Caco-2 (cell line): ENCODE measurements at regions of chr4 and their contacts with region 1.

Region 1: GRCh38 chr4:86497980-86498862 is 95.9 kb upstream of the PTPN13 start:
- DNase-seq: peak in 1 of 2 experiments; percentile 35
- H3K4me3 ChIP-seq: no peak overlapping the region
- H3K4me3 Mint-ChIP-seq: no peak overlapping the region
- H3K27ac Mint-ChIP-seq: no peak overlapping the region
- H3K4me1 ChIP-seq: peaks cover 5% of the 10 kb centered on the region; the same call in 1 of the 2 replicates
- H3K4me1 Mint-ChIP-seq: peaks cover 7% of the 10 kb centered on the region
- H3K27me3 ChIP-seq: no peaks in the 10 kb centered on the region
- H3K27me3 Mint-ChIP-seq: no peaks in the 10 kb centered on the region
- CTCF ChIP-seq: peak; percentile 71 to 75

Region 2: GRCh38 chr4:86380243-86380642 is 118.0 kb before region 1 on chr4:
- CTCF ChIA-PET with region 1: no interaction called
- POLR2A ChIA-PET with region 1: no interaction called
- intact Hi-C with region 1: loop called (anchors 5 kb)
- DNase-seq: peak in 1 of 2 experiments; percentile 55
- H3K4me3 ChIP-seq: no peak overlapping the region
- H3K4me3 Mint-ChIP-seq: no peak overlapping the region
- H3K27ac Mint-ChIP-seq: no peak overlapping the region
- H3K4me1 ChIP-seq: no peaks in the 10 kb centered on the region
- H3K4me1 Mint-ChIP-seq: no peaks in the 10 kb centered on the region
- H3K27me3 ChIP-seq: no peaks in the 10 kb centered on the region; the same call in 1 of the 2 replicates
- H3K27me3 Mint-ChIP-seq: peaks cover 4% of the 10 kb centered on the region
- CTCF ChIP-seq: no peak

Region 3: DNA sequence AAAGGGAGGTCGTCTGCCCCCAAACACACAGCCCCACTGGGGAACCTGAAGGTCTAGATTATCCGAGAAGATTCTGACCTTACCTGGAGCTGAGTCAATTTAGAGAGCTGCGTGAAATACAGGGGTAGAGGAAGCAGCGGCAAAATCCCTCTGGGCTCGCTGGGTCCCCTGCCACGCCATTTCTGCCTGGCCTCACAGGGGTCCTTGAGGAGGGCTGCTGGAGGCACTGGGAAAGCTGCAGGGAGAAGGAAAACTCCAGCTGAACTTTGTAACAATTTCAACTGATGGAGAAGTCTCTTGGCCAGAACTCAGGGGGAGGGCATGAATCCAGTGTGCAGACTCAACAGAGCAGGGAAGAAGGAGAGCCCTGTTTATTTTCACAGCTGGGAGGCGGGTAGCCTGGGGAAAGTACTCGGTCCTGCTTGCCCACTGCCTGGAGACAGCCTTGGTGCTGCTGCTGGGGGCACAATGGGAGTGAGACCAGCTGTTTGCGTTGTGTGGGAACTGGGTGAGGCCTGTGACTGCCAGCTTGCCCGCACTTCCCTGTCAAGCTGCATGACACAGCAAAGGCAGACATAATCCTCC is 45.2 kb before region 1 on chr4:
- CTCF ChIA-PET with region 1: no interaction called
- POLR2A ChIA-PET with region 1: no interaction called
- intact Hi-C with region 1: no loop called
- DNase-seq: no peak
- H3K4me3 ChIP-seq: no peak overlapping the region
- H3K4me3 Mint-ChIP-seq: no peak overlapping the region
- H3K27ac Mint-ChIP-seq: no peak overlapping the region
- H3K4me1 ChIP-seq: no peaks in the 10 kb centered on the region
- H3K4me1 Mint-ChIP-seq: peaks cover 16% of the 10 kb centered on the region
- H3K27me3 ChIP-seq: no peaks in the 10 kb centered on the region
- H3K27me3 Mint-ChIP-seq: no peaks in the 10 kb centered on the region
- CTCF ChIP-seq: no peak

Region 4: DNA sequence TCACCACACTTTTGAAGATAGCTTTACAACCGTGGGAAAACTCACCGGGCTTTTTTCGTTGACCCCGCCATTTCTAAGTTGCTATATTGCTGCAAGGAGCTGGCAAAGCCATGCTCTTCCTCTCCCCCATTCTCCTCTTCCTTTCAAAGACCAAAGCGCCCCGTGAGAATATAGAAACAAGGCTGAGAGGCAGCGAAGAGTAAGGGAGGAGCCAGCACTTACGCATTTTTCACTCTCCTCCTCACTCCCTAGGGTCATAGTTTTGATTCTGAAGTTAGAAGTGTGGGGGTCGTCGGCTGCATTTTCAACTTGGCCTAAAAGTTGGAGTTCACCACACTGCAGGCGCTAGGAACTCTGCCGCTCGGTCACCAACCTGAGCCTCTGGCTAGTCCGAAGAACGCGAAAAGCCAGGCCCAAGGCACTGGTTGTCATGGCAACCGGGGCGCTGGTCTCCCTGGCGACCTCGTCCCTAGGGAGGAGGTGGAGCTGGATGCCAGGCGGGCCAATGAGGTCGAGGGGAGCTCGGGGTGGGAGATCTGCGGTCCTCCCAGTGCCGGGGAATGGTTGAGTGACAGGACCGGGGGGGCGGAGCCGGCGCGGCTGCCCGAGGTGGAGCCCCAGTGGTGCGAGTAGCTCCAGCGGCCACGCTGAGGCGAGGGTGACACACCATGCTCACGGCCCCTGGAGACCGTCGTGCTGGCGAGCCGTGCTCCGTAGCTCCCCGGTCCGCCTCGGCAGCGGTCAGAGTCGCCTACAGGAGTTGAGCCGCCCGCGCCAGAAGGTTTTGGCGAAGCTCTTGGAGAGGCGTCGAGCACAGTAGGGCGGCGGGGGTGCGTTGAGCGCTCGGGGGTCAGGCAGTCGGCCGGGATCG is 95.7 kb after region 1 on chr4 and contains the start of gene PTPN13:
- CTCF ChIA-PET with region 1: interaction called, 8 read pairs
- POLR2A ChIA-PET with region 1: no interaction called
- intact Hi-C with region 1: loop called (anchors 2 kb)
- DNase-seq: peak; percentile 96
- H3K4me3 ChIP-seq: peak within 1 kb of the TSS; percentile 51
- H3K4me3 Mint-ChIP-seq: peak within 1 kb of the TSS; percentile 78
- H3K27ac Mint-ChIP-seq: peak within 1 kb of the TSS; percentile 69
- H3K4me1 ChIP-seq: no peaks in the 10 kb centered on the region
- H3K4me1 Mint-ChIP-seq: peaks cover 7% of the 10 kb centered on the region
- H3K27me3 ChIP-seq: no peaks in the 10 kb centered on the region
- H3K27me3 Mint-ChIP-seq: peaks cover 3% of the 10 kb centered on the region
- CTCF ChIP-seq: no peak
- total RNA-seq, gene PTPN13: 12.1 and 14.8 TPM in 2 replicates

Region 5: GRCh38 chr4:86855573-86855992 is 357.4 kb after region 1 on chr4:
- CTCF ChIA-PET with region 1: interaction called, 3 read pairs
- POLR2A ChIA-PET with region 1: no interaction called
- intact Hi-C with region 1: loop called (anchors 1 kb)
- DNase-seq: peak in 1 of 2 experiments; percentile 30
- H3K4me3 ChIP-seq: no peak overlapping the region
- H3K4me3 Mint-ChIP-seq: no peak overlapping the region
- H3K27ac Mint-ChIP-seq: no peak overlapping the region
- H3K4me1 ChIP-seq: peaks cover 10% of the 10 kb centered on the region
- H3K4me1 Mint-ChIP-seq: peaks cover 7% of the 10 kb centered on the region
- H3K27me3 ChIP-seq: no peaks in the 10 kb centered on the region
- H3K27me3 Mint-ChIP-seq: no peaks in the 10 kb centered on the region
- CTCF ChIP-seq: no peak